MCF 10A (cell line): ENCODE measurements at regions of chr1 and their contacts with region 1.

Region 1: GRCh38 chr1:151311589-151312331 is 15.5 kb downstream of the PI4KB start:
- DNase-seq: peak; percentile 100
- H3K4me3 Mint-ChIP-seq: no peak overlapping the region
- H3K27ac Mint-ChIP-seq: peak overlapping the region; percentile 95
- H3K4me1 Mint-ChIP-seq: peaks cover 40% of the 10 kb centered on the region
- H3K27me3 Mint-ChIP-seq: no peaks in the 10 kb centered on the region
- CTCF ChIP-seq: no peak

Region 2: GRCh38 chr1:151198255-151199127 is 113.3 kb before region 1 on chr1 and contains the start of gene PIP5K1A:
- CTCF ChIA-PET with region 1: no interaction called
- POLR2A ChIA-PET with region 1: interaction called, 15 read pairs
- intact Hi-C with region 1: no loop called
- DNase-seq: peak; percentile 100
- H3K4me3 Mint-ChIP-seq: peak within 1 kb of the TSS; percentile 93
- H3K27ac Mint-ChIP-seq: peak within 1 kb of the TSS; percentile 95
- H3K4me1 Mint-ChIP-seq: peaks cover 40% of the 10 kb centered on the region
- H3K27me3 Mint-ChIP-seq: no peaks in the 10 kb centered on the region
- CTCF ChIP-seq: no peak
- total RNA-seq, gene PIP5K1A: 150 and 163 TPM in 2 replicates

Region 3: DNA sequence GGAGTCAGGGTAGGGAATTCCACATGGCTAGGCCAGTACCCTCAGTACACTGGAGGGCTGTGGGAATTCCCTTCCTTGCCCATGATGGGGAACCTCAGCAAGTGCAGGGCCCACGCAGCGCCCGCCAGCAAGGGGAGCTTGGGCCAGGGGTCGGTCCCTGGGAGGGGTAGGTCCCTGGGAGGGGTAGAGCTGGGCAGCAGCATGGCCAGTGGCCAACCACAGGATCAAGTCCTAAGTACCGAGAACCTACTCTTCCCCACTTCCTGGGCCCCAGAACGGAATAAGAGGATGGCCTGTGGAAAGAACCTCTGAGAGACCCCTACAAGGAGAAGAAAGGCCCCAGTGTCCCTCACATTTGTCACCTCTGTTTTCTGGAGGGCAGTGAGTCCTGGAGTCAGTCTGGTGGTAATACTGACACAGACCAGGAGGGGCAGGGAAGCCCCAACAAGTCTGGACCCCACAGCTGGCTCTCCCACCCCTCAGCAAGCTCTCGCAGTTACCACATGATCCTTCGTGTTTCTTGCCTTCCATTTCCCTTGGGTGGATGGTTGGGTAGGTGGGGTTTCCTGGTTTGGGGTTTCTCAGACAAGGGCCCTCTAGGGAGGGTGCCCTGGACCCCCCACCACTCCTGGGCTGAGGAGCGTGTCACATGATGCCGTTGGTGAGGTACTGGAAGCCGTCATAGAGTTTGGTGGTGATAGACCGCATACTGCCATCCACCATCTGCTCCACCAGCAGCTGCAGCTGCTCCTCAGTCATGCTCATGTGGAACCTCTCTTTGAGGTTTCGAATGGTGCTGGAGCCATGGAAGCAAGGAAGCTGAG is 19.3 kb before region 1 on chr1:
- CTCF ChIA-PET with region 1: interaction called, 115 read pairs
- POLR2A ChIA-PET with region 1: interaction called, 13 read pairs
- intact Hi-C with region 1: no loop called
- DNase-seq: no peak
- H3K4me3 Mint-ChIP-seq: no peak overlapping the region
- H3K27ac Mint-ChIP-seq: no peak overlapping the region
- H3K4me1 Mint-ChIP-seq: no peaks in the 10 kb centered on the region
- H3K27me3 Mint-ChIP-seq: no peaks in the 10 kb centered on the region
- CTCF ChIP-seq: no peak

Region 4: DNA sequence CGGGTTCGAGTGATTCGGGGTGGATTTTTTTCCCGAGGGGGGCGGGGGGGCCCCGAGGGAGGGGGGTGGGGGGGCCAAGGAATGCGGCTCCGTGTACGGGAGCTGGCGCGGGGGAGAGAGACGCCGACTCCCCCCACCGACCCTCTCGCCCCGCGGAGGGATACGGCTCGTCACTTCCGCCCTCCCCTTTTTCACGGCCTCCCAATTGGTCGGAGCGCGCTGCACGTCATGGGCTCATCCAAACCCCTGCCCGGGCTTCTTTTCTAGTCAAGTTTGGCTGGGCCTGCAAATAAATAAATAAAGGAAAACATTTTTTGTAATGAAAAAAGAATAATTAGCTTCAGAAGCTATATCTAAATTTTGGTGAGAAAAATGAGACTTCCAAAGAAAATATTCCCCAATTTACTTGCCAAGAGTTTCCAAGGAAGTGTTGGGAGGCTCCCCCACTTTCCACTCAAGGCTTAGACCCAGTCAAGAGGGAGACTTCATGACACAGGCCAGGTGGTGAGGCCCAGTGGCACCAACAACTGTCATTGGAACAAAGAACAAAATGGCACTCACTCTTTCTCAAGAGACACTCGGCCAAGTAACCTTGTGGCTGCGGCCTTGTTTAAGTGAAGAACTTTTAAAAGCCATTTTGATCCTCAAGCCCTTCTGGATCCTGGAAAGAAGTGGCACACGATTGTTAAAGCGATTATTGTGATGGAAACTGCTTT is 147.7 kb after region 1 on chr1 and contains the start of gene POGZ:
- CTCF ChIA-PET with region 1: no interaction called
- POLR2A ChIA-PET with region 1: no interaction called
- intact Hi-C with region 1: no loop called
- DNase-seq: peak; percentile 97
- H3K4me3 Mint-ChIP-seq: peak within 1 kb of the TSS; percentile 77
- H3K27ac Mint-ChIP-seq: peak within 1 kb of the TSS; percentile 90
- H3K4me1 Mint-ChIP-seq: peaks cover 4% of the 10 kb centered on the region
- H3K27me3 Mint-ChIP-seq: peaks cover 13% of the 10 kb centered on the region
- CTCF ChIP-seq: no peak
- total RNA-seq, gene POGZ: 92.1 and 92.2 TPM in 2 replicates